ENCODE measurements at regions of chr3 and their contacts with region 1.

Region 1: GRCh38 chr3:2765002-2765579 is 345.1 kb downstream of the IL5RA start:
- DNase-seq: no peak
- H3K4me3 Mint-ChIP-seq: no peak overlapping the region
- H3K27ac Mint-ChIP-seq: no peak overlapping the region
- H3K4me1 Mint-ChIP-seq: peaks cover 4% of the 10 kb centered on the region
- H3K27me3 Mint-ChIP-seq: no peaks in the 10 kb centered on the region

Region 2: DNA sequence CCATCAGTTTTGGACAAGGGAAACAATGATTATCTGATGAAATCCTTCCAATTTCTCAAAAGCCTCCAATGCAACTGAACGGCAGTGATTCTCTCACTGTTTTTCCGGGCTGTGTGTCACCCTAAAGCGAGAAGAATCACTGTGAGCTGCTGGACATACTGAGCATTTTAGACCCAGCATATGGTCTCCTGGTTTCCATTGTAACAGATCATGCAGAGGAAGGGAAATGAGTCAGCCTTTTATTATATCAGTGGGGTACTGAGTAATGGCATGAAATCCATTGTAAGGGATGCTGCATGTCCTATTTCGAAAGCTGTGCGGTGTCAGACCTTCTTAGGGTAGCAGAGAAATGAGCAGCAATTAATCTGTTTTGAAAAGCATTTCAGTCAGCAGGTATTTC is 57.9 kb after region 1 on chr3:
- CTCF ChIA-PET with region 1: no interaction called
- POLR2A ChIA-PET with region 1: no interaction called
- intact Hi-C with region 1: no loop called
- DNase-seq: no peak
- H3K4me3 Mint-ChIP-seq: no peak overlapping the region
- H3K27ac Mint-ChIP-seq: no peak overlapping the region
- H3K4me1 Mint-ChIP-seq: no peaks in the 10 kb centered on the region
- H3K27me3 Mint-ChIP-seq: no peaks in the 10 kb centered on the region

Region 3: GRCh38 chr3:2839876-2840275 is 74.8 kb after region 1 on chr3:
- CTCF ChIA-PET with region 1: no interaction called
- POLR2A ChIA-PET with region 1: no interaction called
- intact Hi-C with region 1: no loop called
- DNase-seq: no peak
- H3K4me3 Mint-ChIP-seq: no peak overlapping the region
- H3K27ac Mint-ChIP-seq: no peak overlapping the region
- H3K4me1 Mint-ChIP-seq: no peaks in the 10 kb centered on the region
- H3K27me3 Mint-ChIP-seq: peaks cover 5% of the 10 kb centered on the region

Region 4: GRCh38 chr3:2870724-2871333 is 105.7 kb after region 1 on chr3:
- CTCF ChIA-PET with region 1: no interaction called
- POLR2A ChIA-PET with region 1: no interaction called
- intact Hi-C with region 1: no loop called
- DNase-seq: no peak
- H3K4me3 Mint-ChIP-seq: no peak overlapping the region
- H3K27ac Mint-ChIP-seq: no peak overlapping the region
- H3K4me1 Mint-ChIP-seq: no peaks in the 10 kb centered on the region
- H3K27me3 Mint-ChIP-seq: peaks cover 10% of the 10 kb centered on the region

Region 5: DNA sequence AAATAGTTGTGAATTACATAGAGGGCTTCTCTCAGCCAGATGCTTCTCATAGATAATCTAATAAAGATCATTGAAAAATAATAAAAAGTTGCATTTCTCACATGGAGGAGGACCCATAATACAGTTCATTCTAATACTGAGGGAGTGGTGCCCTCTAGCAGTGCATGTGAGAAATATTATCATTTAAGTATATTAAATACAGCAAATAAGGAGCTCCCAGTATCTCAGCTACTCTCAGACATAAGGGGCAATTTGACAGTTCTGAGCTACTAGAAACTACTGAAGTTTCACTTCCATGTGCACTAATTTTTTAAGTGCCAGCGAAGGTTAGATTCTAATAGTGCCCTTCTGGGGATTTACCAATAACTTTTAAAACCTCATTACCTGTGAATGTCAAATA is 156.8 kb after region 1 on chr3:
- CTCF ChIA-PET with region 1: interaction called, 3 read pairs
- POLR2A ChIA-PET with region 1: no interaction called
- intact Hi-C with region 1: loop called (anchors 2 kb)
- DNase-seq: no peak
- H3K4me3 Mint-ChIP-seq: no peak overlapping the region
- H3K27ac Mint-ChIP-seq: no peak overlapping the region
- H3K4me1 Mint-ChIP-seq: no peaks in the 10 kb centered on the region
- H3K27me3 Mint-ChIP-seq: no peaks in the 10 kb centered on the region

Region 6: GRCh38 chr3:3027976-3028567 is 263.0 kb after region 1 on chr3:
- CTCF ChIA-PET with region 1: no interaction called
- POLR2A ChIA-PET with region 1: no interaction called
- intact Hi-C with region 1: loop called (anchors 10 kb)
- DNase-seq: no peak
- H3K4me3 Mint-ChIP-seq: no peak overlapping the region
- H3K27ac Mint-ChIP-seq: no peak overlapping the region
- H3K4me1 Mint-ChIP-seq: peaks cover 12% of the 10 kb centered on the region
- H3K27me3 Mint-ChIP-seq: no peaks in the 10 kb centered on the region